Endothelial cell of umbilical vein (primary cell): ENCODE measurements at regions of chr1 and their contacts with region 1.

Region 1: DNA sequence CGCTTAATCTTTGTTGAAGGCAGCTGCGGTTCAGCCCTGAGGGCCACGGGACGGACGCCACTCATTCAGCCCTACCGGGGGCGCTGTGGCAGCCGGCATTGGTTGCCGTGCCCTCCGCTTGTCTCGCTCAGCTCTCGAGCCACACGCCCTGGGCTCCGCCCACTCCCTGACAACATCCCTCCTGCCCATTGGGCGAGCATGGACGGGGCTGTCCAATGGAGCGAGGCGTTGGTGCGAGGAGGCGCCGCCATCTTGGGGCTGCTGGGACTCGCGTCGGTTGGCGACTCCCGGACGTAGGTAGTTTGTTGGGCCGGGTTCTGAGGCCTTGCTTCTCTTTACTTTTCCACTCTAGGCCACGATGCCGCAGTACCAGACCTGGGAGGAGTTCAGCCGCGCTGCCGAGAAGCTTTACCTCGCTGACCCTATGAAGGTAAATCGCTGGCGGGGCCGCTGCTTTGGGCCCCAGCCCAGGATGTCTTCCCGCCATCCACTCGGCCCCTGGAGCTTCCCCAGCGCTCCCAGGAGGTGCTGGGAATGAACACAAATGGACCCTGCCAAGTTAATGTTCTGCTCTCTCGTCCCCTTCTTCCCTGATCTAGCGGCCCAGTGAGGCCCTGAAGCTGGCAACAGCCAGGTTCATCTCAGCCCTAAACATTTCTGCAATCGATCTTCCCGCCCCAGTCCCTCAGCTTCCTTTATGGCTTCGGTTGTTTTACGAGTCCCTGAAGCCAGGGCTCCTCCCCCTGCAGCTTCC is at the start of gene SRP9:
- DNase-seq: peak; percentile 99
- H3K4me3 ChIP-seq: peak within 1 kb of the TSS; percentile 68 to 100 (median 83)
- H3K27ac ChIP-seq: peak within 1 kb of the TSS; percentile 95
- H3K4me1 ChIP-seq: peaks cover 23% of the 10 kb centered on the region
- H3K27me3 ChIP-seq: no peaks in the 10 kb centered on the region
- CTCF ChIP-seq: peak; percentile 94 to 98
- POLR2A ChIP-seq: peak; percentile 85
- total RNA-seq, gene SRP9: 283 and 292 TPM in 2 replicates

Region 2: DNA sequence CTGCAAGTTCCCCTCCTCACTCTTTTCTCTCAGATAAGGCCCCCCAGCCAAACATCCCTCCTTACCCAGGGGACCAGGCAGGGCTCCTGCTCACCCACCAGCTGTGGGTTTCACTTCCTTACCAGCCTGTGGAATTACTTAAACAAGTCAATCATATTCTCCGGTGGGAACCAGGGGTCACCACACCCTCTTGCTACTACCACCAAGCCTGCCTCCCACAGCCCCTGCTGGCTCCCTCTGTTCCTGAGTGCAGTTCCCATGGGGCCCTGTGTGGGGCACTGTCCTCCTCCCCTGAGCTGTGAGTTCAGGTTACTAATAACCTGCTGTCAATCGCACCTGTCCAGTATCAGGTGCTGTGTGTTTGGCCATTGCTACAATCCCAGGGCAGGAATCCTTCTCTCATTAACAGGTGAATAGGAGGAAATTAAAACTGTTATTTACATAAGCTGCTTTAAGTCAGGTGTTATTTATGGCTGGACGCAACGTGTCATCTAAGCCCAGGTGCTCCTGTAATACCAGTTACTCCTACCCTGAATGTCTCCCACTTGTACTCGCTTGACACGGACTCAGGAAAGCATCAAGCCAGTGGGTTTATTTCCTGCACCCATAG is 296.8 kb before region 1 on chr1:
- CTCF ChIA-PET with region 1: interaction called, 81 read pairs
- POLR2A ChIA-PET with region 1: interaction called, 3 read pairs
- dilution Hi-C with region 1: no loop called
- intact Hi-C with region 1: loop called (anchors 1 kb)
- DNase-seq: peak; percentile 54
- H3K4me3 ChIP-seq: no peak overlapping the region
- H3K27ac ChIP-seq: no peak overlapping the region
- H3K4me1 ChIP-seq: no peaks in the 10 kb centered on the region
- H3K27me3 ChIP-seq: no peaks in the 10 kb centered on the region
- CTCF ChIP-seq: peak; percentile 86
- POLR2A ChIP-seq: no peak

Region 3: DNA sequence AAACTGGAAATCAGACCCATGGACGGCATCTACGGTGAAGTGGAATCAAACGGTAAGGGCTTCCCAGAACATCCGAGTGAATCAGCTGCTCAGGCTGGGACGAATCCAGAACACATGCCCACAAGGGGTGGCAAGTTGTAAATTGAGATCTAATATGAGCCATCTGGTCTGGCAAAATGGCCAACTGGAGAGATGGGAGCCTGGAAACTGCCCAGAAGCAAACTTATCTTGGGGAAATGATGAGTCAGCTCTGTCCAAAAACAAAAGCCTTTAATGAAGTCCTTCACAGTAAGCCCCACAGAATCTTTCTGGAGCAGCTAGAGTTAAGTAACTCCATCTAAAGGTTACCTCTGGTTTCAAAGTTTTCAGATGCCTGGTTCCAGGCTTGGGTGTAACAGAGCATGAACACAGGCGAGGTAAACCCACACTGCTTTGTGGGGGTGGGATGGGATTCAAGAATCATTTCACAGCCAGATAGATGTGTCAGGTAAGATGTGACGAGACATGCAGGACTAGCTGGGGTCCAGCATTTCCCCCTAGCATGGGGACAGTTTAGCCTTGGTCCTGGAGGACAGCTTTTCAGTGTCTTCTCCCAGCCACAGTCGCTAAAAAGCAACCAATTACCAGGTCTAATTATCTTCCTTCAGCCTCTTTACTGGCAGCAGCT is 10.7 kb before region 1 on chr1:
- CTCF ChIA-PET with region 1: interaction called, 41 read pairs
- POLR2A ChIA-PET with region 1: interaction called, 4 read pairs
- dilution Hi-C with region 1: no loop called
- intact Hi-C with region 1: no loop called
- DNase-seq: peak; percentile 84
- H3K4me3 ChIP-seq: no peak overlapping the region
- H3K27ac ChIP-seq: peak overlapping the region; percentile 58
- H3K4me1 ChIP-seq: peaks cover 47% of the 10 kb centered on the region
- H3K27me3 ChIP-seq: no peaks in the 10 kb centered on the region
- CTCF ChIP-seq: no peak
- POLR2A ChIP-seq: no peak

Region 4: GRCh38 chr1:225845571-225846259 is 68.0 kb after region 1 on chr1:
- CTCF ChIA-PET with region 1: interaction called, 29 read pairs
- POLR2A ChIA-PET with region 1: no interaction called
- dilution Hi-C with region 1: no loop called
- intact Hi-C with region 1: loop called (anchors 1 kb)
- DNase-seq: peak; percentile 70
- H3K4me3 ChIP-seq: no peak overlapping the region
- H3K27ac ChIP-seq: no peak overlapping the region
- H3K4me1 ChIP-seq: no peaks in the 10 kb centered on the region
- H3K27me3 ChIP-seq: no peaks in the 10 kb centered on the region
- CTCF ChIP-seq: peak; percentile 72 to 91
- POLR2A ChIP-seq: no peak

Region 5: DNA sequence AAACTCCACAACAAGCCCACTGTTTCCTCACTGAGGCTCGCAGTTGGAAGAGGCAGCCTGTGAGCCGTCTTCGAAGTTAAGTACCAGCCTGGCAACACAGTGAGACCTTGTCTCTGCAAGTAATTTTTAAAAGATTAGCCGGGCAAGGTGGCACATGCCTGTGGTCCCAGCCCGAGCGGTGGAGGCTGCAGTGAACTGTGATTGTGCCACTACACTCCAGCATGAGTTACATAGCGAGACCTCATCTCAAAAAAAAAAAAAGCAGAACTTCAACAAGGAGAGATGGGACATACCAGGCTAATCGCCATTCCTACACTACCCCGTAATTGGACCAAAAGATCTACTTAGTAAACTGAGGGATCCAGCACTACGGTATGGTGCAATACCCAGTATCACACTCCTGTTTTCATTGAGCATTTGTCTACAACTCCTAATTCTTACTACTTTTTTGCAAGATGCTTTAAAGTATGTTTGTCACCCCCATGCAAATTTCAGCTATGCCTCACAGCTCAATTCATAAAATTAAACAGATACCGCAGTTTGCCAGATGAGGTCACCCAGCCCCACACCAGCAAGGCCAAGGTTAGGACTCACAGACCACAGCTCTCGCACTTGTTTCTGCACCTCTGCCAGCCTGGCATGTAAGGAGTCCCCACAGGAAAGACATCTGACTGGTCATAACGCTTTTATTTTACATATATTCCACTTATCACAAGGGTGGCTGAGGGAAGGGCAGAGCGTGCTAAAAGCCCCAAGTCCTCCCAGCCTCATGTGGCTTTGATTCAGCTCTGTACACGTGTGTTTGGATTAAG is 200.4 kb after region 1 on chr1:
- CTCF ChIA-PET with region 1: interaction called, 9 read pairs
- POLR2A ChIA-PET with region 1: no interaction called
- dilution Hi-C with region 1: no loop called
- intact Hi-C with region 1: loop called (anchors 1 kb)
- DNase-seq: no peak
- H3K4me3 ChIP-seq: no peak overlapping the region
- H3K27ac ChIP-seq: no peak overlapping the region
- H3K4me1 ChIP-seq: no peaks in the 10 kb centered on the region
- H3K27me3 ChIP-seq: no peaks in the 10 kb centered on the region
- CTCF ChIP-seq: no peak
- POLR2A ChIP-seq: no peak